ENCODE measurements at regions of chr7 and their contacts with region 1.

Region 1: GRCh38 chr7:72493850-72494661 is 81.9 kb upstream of the CALN1 start:
- DNase-seq: peak; percentile 37 to 88 (median 66)
- ATAC-seq: peak; percentile 40 to 89 (median 81)
- H3K4me3 ChIP-seq: no peak overlapping the region
- H3K27ac ChIP-seq: no peak overlapping the region
- H3K4me1 ChIP-seq: no peaks in the 10 kb centered on the region
- H3K27me3 ChIP-seq: no peaks in the 10 kb centered on the region
- CTCF ChIP-seq: peak; percentile 46 to 80 (median 77)

Region 2: DNA sequence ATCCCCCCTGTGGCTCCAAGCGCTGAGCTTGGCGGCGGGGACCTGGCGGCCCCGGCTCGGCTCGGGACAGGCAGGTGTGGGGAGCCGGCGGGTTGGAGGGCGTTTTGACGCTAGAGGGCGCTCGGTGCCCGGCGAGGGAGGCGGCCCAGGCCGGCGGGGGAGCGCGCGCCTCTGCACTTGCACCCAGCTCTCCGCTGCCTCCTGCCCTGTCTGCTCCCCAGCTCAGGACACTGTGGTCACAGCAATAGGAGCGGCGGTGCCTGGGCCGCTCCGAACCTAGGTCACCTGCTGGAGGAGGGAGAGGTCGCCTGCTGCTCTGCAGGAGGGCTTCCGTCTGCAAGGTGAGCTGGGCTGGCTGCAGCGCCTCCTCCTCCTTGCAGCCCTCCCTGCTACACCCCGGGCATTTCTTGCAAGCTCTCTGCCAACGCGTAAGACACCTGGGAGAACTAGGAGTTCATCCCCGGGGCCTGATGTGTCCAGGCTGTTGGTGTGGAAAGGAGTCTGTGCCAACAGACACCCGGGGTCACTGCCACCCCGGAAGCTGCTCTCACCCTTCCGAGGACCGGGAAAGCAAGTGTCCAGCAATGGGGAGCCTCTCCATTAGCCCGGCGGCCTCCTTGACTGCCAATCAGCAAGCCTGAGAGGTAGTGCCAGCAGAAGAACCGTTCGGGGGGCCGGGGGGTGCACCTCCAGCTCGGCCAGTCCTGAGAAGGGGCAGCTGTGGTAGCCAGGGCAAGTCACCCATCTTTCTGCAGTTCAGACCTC is 741.7 kb before region 1 on chr7:
- intact Hi-C with region 1: loop called in 1 of 3 experiments (anchors 5 kb)
- DNase-seq: peak; percentile 28 to 95 (median 68)
- ATAC-seq: peak; percentile 84 to 96 (median 92)
- H3K4me3 ChIP-seq: peak overlapping the region in 2 of 4 donors; percentile 1 to 27
- H3K27ac ChIP-seq: no peak overlapping the region
- H3K4me1 ChIP-seq: peaks cover 0 to 4% (median 0%) of the 10 kb centered on the region in 3 donors
- H3K27me3 ChIP-seq: no peaks in the 10 kb centered on the region
- CTCF ChIP-seq: peak; percentile 69 to 85 (median 75)

Region 3: GRCh38 chr7:72462311-72462710 is 31.7 kb before region 1 on chr7:
- intact Hi-C with region 1: no loop called
- DNase-seq: no peak
- ATAC-seq: no peak
- H3K4me3 ChIP-seq: no peak overlapping the region
- H3K27ac ChIP-seq: no peak overlapping the region
- H3K4me1 ChIP-seq: no peaks in the 10 kb centered on the region
- H3K27me3 ChIP-seq: no peaks in the 10 kb centered on the region
- CTCF ChIP-seq: no peak

Measured in pancreas (tissue), 10 donors.